Left colon (tissue), 2 donors: ENCODE measurements at regions of chr15 and their contacts with region 1.

Region 1: DNA sequence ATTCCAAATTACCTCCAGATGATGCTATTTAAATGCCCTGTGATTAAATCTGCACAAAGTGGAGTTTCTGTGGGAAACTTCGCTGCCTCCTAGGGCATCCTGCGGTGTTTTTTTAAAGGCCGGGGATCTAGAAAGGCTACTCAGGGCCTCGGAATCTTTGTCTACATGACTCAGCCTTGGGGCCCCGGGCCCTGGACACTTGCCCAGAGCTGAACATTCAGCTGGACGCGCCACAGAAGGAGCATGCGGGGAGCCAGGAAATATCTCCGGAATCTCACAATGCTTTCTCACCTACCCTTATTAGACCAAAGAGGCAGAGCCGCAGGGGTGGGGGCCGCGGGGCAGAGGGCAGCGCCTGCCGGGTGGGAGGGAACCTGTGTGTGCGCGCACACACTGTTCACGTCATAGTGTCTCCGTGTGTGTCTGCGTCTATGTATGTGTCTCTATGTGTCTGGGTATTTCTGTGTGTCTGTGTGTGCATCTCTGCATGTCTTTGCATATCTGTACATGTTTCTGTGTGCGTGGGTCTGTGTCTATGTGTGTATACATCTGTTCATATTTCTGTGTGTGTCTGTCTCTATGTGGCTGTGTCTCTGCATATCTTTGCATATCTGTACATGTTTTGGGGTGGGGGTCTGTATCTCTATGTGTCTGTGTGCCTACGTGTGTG is 145.4 kb upstream of the TPM1 start:
- DNase-seq: peak; percentile 76 to 87
- ATAC-seq: peak; percentile 68

Region 2: GRCh38 chr15:62847900-62848489 is 49.1 kb before region 1 on chr15:
- intact Hi-C with region 1: loop called in 1 of 2 experiments (anchors 10 kb)
- DNase-seq: peak; percentile 74 to 87
- ATAC-seq: peak; percentile 73

Region 3: GRCh38 chr15:62868507-62868906 is 28.6 kb before region 1 on chr15:
- intact Hi-C with region 1: loop called in 1 of 2 experiments (anchors 5 kb)
- DNase-seq: no peak
- ATAC-seq: peak; percentile 50

Region 4: DNA sequence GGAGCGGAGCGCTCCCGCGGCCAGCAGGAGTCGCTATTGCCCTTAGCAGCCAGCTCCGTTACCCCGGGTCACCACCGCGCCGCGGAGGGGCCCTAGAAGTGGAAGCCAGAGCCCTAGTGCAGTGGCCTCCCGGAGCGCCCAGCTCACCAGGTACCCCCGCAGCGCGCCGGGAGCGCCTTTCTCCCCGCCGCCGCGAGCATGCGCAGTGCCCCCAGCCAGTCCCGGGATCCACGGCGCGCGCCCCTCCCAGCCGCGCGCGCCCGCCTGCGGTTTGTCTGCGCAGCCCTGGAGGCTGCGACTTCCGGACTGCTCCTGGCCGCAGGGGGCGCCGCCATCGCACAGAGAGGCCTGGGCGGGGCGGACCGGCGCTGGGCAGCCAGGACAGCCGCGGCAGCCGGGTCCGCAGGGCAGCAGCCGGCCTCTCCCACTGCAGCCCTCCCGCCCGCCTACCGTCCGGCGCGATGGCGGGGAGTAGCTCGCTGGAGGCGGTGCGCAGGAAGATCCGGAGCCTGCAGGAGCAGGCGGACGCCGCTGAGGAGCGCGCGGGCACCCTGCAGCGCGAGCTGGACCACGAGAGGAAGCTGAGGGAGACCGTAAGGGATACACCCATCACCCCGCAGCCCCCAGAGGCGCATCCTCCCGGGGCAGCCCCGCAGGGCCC is 151.1 kb after region 1 on chr15:
- intact Hi-C with region 1: loop called in 1 of 2 experiments (anchors 10 kb)
- DNase-seq: peak; percentile 93 to 95
- ATAC-seq: peak; percentile 62

Region 5: GRCh38 chr15:63238796-63239195 is 341.7 kb after region 1 on chr15:
- intact Hi-C with region 1: no loop called
- DNase-seq: no peak
- ATAC-seq: no peak